K562 (cell line): ENCODE measurements at regions of chr4 and their contacts with region 1.

Region 1: DNA sequence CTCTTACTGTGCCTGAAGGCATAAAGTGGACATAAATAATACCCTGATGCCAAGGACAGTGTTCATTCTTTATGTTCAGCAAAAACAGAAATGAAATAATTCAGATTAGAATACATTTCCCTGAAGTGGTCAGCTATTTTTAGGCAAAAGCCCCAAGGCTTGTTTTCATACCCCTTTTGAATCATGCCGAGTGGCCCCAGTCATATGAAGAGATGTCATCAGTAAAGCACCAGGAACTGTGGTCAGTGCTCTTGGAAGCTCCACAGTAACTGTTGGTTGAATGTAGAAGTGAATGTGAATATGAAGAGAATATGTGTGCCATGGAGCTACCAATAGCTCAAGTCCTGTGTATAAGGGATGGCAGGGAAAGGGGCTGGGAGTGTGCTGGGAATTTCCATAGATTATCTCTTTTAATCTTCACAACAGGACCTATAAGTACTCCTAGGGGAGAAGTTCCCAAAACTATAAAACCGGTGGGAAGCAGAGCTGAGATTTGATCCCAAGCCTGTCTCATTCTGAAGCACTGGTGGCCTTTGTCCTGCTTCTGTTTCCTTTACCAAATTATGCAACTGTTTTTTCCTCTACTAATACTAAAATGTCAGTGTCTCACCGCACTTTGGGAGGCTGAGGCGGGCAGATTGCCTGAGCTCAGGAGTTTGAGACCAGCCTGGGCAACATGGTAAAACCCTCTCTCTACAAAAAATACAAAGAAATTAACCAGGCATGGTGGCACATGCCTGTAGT is 52.6 kb downstream of the FNIP2 start:
- DNase-seq: no peak
- ATAC-seq: no peak
- H3K4me3 ChIP-seq: no peak overlapping the region
- H3K27ac ChIP-seq: no peak overlapping the region
- H3K4me1 ChIP-seq: peaks cover 9 to 48% of the 10 kb centered on the region in 2 experiments; a peak in 4 of 5 replicates
- H3K27me3 ChIP-seq: no peaks in the 10 kb centered on the region
- CTCF ChIP-seq: no peak
- EP300 ChIP-seq: no peak
- POLR2A ChIP-seq: no peak
- RAD21 ChIP-seq: no peak

Region 2: DNA sequence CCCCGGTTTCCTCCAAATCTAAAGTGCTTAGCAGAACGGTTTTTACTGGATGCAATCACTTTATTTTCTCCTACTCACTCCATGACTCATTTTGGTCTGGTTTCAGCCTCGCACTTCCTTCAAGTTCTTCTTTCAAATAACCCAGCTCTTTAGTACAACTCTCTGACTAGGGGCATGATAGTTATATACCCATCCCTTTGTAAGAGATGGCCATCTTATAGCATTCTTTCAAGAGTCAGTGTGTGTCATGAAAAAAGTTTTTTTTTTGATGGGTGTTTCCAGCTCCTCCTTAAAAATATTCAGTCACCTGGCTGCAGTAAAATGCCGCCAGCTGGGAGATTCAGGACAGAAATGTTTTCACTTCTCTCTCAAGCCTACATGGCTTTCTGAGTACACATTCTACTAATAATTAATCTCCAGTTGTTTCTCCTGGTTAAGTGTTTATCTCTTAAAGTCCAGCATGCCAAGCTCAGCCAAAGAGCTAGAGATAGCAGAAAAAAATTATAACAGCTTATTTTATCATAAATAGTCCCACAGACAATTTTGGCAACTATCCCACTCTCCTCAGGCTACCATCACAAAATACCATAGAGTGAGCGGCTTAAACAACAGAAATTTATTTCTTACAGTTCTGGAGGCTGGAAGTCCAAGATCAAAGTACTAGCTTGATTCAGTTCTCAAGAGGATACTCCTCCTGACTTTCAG is 787.8 kb before region 1 on chr4:
- CTCF ChIA-PET with region 1: no interaction called
- POLR2A ChIA-PET with region 1: no interaction called
- in situ Hi-C with region 1: no loop called
- intact Hi-C with region 1: no loop called
- DNase-seq: no peak
- ATAC-seq: no peak
- H3K4me3 ChIP-seq: no peak overlapping the region
- H3K27ac ChIP-seq: no peak overlapping the region
- H3K4me1 ChIP-seq: no peaks in the 10 kb centered on the region
- H3K27me3 ChIP-seq: no peaks in the 10 kb centered on the region
- CTCF ChIP-seq: no peak
- EP300 ChIP-seq: no peak
- POLR2A ChIP-seq: no peak
- RAD21 ChIP-seq: no peak

Region 3: GRCh38 chr4:158778156-158778711 is 43.2 kb before region 1 on chr4:
- CTCF ChIA-PET with region 1: no interaction called
- POLR2A ChIA-PET with region 1: no interaction called
- in situ Hi-C with region 1: no loop called
- intact Hi-C with region 1: loop called (anchors 10 kb)
- DNase-seq: no peak
- ATAC-seq: no peak; the same call in 2 of the 3 replicates
- H3K4me3 ChIP-seq: no peak overlapping the region
- H3K27ac ChIP-seq: no peak overlapping the region
- H3K4me1 ChIP-seq: peaks cover 6 to 25% of the 10 kb centered on the region in 2 experiments
- H3K27me3 ChIP-seq: no peaks in the 10 kb centered on the region
- CTCF ChIP-seq: no peak
- EP300 ChIP-seq: no peak
- POLR2A ChIP-seq: no peak
- RAD21 ChIP-seq: no peak

Region 4: DNA sequence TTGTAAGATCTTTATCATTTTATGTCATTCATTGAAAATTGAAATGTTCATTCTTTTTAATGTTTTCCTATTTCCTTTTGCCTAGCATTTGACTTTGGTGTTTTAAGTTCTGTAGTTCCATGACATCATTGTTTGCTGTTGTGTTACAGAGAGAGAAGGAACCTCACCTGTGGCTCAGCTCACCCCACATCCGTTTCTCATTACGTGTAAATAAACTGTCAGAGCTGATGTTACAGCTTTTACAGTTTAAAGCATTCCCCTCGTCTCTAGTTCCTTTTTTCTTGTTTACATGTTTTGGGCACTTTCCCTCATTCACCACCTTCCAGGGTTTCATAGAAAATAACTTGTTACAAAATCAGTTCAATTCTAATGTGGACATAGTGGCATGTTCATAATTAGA is 84.7 kb after region 1 on chr4:
- CTCF ChIA-PET with region 1: no interaction called
- POLR2A ChIA-PET with region 1: no interaction called
- in situ Hi-C with region 1: no loop called
- intact Hi-C with region 1: no loop called
- DNase-seq: no peak
- ATAC-seq: no peak
- H3K4me3 ChIP-seq: no peak overlapping the region
- H3K27ac ChIP-seq: no peak overlapping the region
- H3K4me1 ChIP-seq: peaks cover 7 to 13% of the 10 kb centered on the region in 2 experiments; a peak in 4 of 5 replicates
- H3K27me3 ChIP-seq: no peaks in the 10 kb centered on the region
- CTCF ChIP-seq: no peak
- EP300 ChIP-seq: no peak
- POLR2A ChIP-seq: no peak
- RAD21 ChIP-seq: no peak

Region 5: DNA sequence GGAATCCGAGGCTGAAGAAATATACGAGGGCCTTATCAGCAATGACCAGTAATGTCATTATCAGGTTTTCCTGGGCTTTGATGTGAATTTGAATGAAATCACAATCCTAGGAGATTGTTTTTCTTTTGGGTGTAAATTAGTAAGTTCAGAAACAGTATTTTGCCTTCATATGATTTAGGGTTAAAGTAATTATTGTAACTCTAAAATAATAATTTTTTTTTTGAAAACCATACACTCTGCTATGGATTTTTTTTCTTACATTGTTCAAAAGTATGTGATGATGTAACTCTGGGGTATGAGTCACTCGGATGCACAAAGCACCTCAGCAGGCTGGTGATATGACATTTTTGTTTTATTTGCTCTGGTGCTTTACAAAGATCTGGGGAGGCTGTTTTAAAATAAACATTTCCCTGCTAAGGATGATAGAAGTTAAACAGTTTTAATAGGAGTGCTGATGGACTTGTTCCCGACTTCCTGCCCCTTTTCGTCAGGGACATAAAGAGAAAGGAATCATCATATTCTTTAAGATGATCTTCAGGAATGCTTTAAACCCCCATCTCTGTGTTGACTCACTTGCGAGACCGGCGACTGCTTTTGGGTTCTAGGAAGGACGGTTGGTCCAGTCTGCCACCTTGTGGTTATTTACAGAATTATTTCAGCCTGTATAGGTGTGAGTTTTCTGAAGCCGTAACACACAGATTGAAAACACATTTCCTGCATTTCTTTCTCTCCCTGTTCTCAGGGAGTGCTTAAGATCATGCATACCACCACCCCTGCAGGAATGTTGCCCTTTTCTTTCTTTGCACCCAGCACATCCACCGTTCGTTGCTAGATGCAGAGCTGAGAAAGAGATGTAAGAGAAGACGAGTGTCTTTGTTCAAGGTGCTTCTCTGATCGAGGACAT is 353.9 kb after region 1 on chr4:
- CTCF ChIA-PET with region 1: no interaction called
- POLR2A ChIA-PET with region 1: no interaction called
- in situ Hi-C with region 1: no loop called
- intact Hi-C with region 1: no loop called
- DNase-seq: peak; percentile 49 to 88 (median 63)
- ATAC-seq: peak; percentile 93
- H3K4me3 ChIP-seq: no peak overlapping the region
- H3K27ac ChIP-seq: no peak overlapping the region; the same call in 2 of the 3 replicates
- H3K4me1 ChIP-seq: peaks cover 3 to 23% of the 10 kb centered on the region in 2 experiments; a peak in 3 of 5 replicates
- H3K27me3 ChIP-seq: no peaks in the 10 kb centered on the region
- CTCF ChIP-seq: peak; percentile 78 to 86 (median 80)
- EP300 ChIP-seq: peak; percentile 24
- POLR2A ChIP-seq: no peak
- RAD21 ChIP-seq: peak; percentile 87 to 88